Activated CD8-positive, alpha-beta memory T cell treated with anti-CD3 and anti-CD28 coated beads, Interleukin-2, amount 10 ng/mL, durations not matched to agents 7 days and 5 days (primary cell): ENCODE measurements at regions of chr11 and their contacts with region 1.

Region 1: DNA sequence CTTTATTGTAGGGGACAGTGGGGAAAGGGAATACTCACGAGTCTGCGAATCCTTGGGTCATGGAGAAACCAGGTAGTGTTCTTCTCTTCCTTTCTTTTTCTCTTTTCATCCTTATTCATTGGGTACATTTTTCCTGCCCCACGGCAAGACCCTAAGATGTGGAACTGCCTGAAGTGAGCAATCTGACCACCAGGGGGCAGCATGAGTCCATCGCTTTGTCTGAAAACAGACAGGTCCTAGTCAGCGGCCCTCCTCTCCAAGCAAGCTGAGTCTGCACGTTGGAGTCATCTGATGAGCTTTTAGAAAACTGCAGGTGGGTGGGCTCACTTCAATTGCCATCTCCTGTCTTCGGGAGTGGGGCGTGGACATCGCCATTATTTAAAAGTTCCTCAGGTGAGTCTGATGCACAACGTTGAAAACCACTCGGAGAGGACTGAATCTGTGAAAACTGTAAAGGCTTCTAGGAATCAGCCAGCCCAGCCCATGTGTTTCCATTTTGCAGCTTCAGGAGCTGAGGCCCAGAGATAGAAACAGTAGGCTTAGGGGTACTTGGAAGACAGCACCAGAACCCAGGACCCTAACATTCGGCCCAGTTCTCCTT is 34.0 kb upstream of the FBXO3 start:
- DNase-seq: peak; percentile 87
- ATAC-seq: peak; percentile 84
- H3K4me3 Mint-ChIP-seq: no peak overlapping the region
- H3K27ac Mint-ChIP-seq: no peak overlapping the region
- H3K4me1 Mint-ChIP-seq: no peaks in the 10 kb centered on the region
- H3K27me3 Mint-ChIP-seq: peaks cover 34% of the 10 kb centered on the region

Region 2: GRCh38 chr11:33716236-33716635 is 92.1 kb before region 1 on chr11:
- CTCF ChIA-PET with region 1: interaction called, 12 read pairs
- DNase-seq: no peak
- ATAC-seq: no peak
- H3K4me3 Mint-ChIP-seq: no peak overlapping the region
- H3K27ac Mint-ChIP-seq: no peak overlapping the region
- H3K4me1 Mint-ChIP-seq: peaks cover 11% of the 10 kb centered on the region
- H3K27me3 Mint-ChIP-seq: no peaks in the 10 kb centered on the region

Region 3: DNA sequence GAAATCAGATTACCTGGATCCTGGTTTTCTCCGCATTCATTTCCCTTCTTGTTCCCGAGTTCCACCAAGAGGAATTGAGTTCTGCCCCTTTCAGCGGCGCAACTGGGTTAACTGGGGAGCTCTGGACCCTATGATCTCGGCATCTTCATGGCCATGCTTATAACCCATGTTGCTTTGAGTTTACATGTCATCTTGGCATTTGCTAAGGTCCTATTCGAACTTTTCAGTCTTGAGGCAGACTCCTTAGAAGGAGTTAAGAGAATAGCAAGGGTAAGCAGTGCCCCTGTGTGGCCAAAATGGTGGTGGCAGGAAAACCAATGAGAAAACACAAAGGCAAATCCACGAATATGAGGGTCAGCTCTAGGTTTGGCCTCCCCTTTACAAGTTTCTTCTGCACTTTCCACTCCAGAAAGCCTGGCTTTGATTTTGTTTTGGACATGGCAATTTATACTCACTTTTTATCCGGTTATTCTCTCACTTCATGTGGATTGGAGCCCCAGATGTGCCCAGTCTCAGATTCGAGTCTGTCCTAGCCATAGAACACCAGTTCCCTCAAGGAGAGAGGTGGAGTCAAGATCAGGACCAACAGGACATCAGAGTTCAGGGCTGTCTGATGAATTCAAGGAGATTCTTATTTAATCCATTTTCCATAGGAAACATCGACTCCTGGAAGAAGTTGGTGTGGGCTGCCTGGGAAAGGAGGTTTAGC is 21.3 kb after region 1 on chr11:
- CTCF ChIA-PET with region 1: interaction called, 56 read pairs
- DNase-seq: peak; percentile 76
- ATAC-seq: peak; percentile 80
- H3K4me3 Mint-ChIP-seq: peak overlapping the region; percentile 3
- H3K27ac Mint-ChIP-seq: no peak overlapping the region
- H3K4me1 Mint-ChIP-seq: peaks cover 6% of the 10 kb centered on the region
- H3K27me3 Mint-ChIP-seq: peaks cover 61% of the 10 kb centered on the region

Region 4: GRCh38 chr11:33949252-33949913 is 141.1 kb after region 1 on chr11:
- CTCF ChIA-PET with region 1: no interaction called
- DNase-seq: no peak
- ATAC-seq: no peak
- H3K4me3 Mint-ChIP-seq: no peak overlapping the region
- H3K27ac Mint-ChIP-seq: no peak overlapping the region
- H3K4me1 Mint-ChIP-seq: no peaks in the 10 kb centered on the region
- H3K27me3 Mint-ChIP-seq: peaks cover 16% of the 10 kb centered on the region

Region 5: DNA sequence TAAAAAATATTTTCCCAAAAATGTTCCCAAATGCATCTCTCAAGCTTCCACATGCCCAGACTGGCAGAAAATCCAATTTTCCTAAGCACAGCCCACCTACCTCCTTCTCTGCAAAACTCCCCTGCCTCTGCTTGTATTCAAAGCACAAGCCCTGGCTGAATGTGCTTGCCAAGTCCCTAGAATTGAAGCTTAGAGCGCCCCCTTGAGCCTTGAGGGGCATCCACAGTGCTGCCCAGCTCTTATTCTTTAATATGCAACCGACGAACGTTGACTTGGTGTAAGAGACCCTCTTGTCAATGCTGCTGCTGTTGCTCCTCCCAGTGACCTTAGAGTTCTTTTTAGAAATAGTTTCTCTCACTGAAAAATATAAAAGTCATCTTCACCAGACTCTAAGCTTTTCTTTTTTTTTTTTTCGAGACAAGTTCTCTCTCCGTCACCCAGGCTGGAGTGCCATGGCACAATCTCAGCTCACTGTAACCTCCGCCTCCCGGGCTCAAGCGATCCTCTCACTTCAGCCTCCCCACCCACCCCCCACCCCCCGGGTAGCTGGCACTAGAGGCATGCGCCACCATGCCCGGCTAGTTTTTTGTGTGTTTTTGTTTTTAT is 179.8 kb after region 1 on chr11:
- CTCF ChIA-PET with region 1: interaction called, 11 read pairs
- DNase-seq: peak; percentile 83
- ATAC-seq: peak; percentile 89
- H3K4me3 Mint-ChIP-seq: no peak overlapping the region
- H3K27ac Mint-ChIP-seq: no peak overlapping the region
- H3K4me1 Mint-ChIP-seq: peaks cover 12% of the 10 kb centered on the region
- H3K27me3 Mint-ChIP-seq: peaks cover 4% of the 10 kb centered on the region

Region 6: GRCh38 chr11:34344768-34345539 is 536.6 kb after region 1 on chr11:
- CTCF ChIA-PET with region 1: no interaction called
- DNase-seq: peak; percentile 49
- ATAC-seq: peak; percentile 20
- H3K4me3 Mint-ChIP-seq: no peak overlapping the region
- H3K27ac Mint-ChIP-seq: no peak overlapping the region
- H3K4me1 Mint-ChIP-seq: peaks cover 21% of the 10 kb centered on the region
- H3K27me3 Mint-ChIP-seq: peaks cover 18% of the 10 kb centered on the region